ENCODE measurements at regions of chr6 and their contacts with region 1.

Region 1: DNA sequence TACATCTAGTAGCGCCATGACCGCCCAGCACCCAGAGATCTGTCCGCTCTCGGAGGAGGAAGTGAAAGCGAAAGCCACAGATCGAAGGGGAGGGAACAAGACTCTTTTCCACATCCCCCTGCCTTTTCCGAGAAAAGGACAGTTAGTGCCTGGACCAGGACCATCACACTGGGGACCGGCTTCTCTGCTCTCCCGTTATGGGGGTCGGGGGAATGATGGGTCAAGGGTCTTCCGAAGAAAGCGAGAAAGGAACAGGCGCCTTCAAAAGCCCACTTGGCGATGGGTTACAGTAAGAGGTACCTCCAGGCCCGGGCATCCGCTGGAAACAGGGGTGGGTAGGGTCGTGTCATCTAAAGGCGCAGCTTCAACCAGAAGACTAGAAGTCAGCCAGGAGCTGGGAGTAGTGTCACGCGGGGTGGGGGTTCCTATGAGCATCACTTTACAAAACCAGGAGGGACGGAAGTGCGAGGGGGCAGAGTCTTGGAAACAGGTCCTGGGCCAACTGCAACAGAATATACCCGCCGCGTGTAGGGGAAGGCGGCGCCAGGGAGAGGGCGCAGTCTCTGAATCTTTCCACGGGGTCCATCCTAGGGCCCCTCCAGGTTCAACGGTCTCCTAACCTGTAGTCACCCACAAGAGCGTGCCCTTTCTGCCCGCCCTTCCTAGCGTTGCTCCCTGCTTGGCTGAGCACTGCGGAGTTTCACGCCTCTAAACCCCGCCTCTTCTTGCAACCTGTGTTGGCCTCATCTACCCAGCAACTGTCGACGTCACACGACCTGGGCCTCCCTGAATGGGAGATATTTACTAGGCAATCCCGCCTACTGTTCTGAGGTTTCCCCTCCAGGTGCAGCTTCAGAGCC is at the start of gene PSMB8:
- DNase-seq: peak; percentile 91
- H3K4me3 ChIP-seq: peak within 1 kb of the TSS; percentile 83
- CTCF ChIP-seq: peak; percentile 29

Region 2: DNA sequence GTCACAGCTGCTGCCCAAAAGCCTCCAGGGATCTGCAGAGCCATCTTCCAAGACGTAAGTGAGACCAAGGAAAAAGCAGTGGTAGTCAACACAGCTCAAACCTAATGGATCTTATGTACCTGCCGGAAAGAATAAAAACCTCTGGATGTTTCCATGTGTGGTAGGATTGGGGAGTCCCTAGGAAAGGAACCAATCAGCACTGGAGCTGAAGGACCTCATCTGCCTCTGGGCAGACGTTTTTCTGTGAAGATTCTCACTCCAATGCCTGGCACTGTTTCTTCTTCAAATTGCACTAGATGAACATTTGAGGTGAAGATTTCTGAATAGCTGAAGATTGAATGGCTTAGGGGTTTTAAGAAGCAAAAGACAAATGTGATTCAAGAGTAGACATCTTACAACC is 80.8 kb before region 1 on chr6 and contains the start of gene HLA-DQB2:
- in situ Hi-C with region 1: no loop called
- DNase-seq: no peak
- H3K4me3 ChIP-seq: no peak within 1 kb of the TSS
- CTCF ChIP-seq: no peak

Region 3: DNA sequence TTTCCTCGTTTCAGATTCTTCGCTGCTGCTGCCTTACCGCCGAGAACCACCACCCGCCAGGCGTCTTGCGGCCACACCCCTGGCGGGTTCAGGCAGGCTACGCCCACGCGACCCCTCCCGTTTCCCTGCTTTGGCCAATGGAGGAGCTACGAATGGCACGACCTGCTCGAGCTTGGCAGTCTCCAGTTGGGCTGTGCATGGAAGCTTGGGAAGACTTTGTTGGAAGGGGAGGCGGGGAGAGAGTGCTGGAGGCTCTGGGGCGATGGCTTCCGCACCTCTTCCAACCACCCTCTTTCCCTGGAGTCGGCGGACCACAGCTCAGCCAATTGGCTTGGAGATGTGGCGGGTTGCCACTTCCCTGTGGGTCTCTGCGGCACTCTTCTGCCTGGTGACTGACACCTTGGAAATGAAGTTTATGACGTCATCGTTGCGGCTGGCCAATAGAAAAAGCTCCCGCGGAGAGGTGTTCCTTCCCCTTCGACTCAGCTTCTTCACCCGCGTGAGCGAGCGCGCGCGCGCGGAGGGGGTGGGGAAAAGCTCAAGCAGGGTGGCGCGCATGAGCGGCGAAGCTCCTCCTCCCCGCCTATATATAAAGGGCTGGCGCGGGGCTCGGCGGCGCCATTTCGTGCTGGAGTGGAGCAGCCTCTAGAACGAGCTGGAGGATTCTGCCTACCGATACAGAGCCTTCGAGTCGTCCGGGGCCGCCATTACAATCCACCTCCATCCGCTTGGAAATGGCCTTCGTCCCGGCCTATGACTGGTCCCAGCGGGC is 127.6 kb after region 1 on chr6:
- in situ Hi-C with region 1: loop called (anchors 10 kb)
- DNase-seq: peak; percentile 100
- H3K4me3 ChIP-seq: peak overlapping the region; percentile 94
- CTCF ChIP-seq: no peak